ENCODE measurements at regions of chr12 and their contacts with region 1.

Region 1: GRCh38 chr12:56377310-56377988 is 14.8 kb upstream of the APOF start:
- DNase-seq: peak; percentile 54
- H3K4me3 ChIP-seq: peak overlapping the region; percentile 3
- H3K27ac ChIP-seq: peak overlapping the region; percentile 93
- H3K4me1 ChIP-seq: peaks cover 49% of the 10 kb centered on the region
- CTCF ChIP-seq: peak; percentile 58

Region 2: GRCh38 chr12:56315622-56316473 is 61.6 kb before region 1 on chr12 and contains the start of gene CNPY2:
- CTCF ChIA-PET with region 1: no interaction called
- POLR2A ChIA-PET with region 1: interaction called, 3 read pairs
- intact Hi-C with region 1: loop called (anchors 5 kb)
- DNase-seq: peak; percentile 96
- H3K4me3 ChIP-seq: peak within 1 kb of the TSS; percentile 83
- H3K27ac ChIP-seq: peak within 1 kb of the TSS; percentile 60
- H3K4me1 ChIP-seq: peaks cover 14% of the 10 kb centered on the region
- CTCF ChIP-seq: peak; percentile 48; the same call in 1 of the 2 replicates
- total RNA-seq, gene CNPY2: 62.8 and 75.5 TPM in 2 replicates

Region 3: DNA sequence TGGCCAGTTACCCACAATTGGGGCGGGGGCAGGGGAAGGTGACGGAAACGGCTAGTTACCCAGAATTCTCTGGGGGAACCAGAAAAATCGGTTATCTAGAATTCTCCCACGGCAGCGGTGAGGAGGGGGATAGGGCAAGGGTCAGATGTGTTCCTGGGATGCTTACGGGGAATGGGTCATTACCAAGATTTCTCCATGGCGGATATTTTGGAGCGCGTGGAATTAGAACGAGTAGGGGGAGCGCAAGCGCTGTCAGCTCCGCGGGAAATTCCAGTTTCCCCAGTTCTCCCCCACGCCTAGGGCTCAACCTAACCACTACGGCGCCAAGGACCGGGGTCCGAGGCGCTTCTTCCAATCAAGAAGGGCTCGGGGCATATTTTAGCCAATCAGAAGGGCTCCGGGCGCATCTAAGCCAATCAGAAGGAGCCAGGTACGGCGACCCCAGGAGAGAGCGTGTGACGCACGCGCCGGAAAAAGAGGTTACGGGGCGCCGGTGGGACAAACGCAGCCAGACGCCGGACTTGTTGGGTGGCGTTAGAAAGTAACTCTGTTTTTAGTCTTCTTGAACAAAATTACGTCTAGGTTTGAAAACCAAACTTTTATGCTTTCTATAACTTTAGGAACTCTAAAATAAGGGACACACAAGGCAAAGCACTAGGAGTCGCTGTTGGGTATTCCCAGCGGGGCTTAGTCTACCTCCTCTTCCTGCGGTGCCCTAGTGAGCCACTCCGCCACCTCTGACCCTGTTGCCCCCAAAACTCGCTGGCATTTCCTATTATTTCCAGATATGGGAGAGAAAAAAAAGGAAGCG is 43.6 kb before region 1 on chr12 and contains the start of gene PAN2:
- CTCF ChIA-PET with region 1: interaction called, 4 read pairs
- POLR2A ChIA-PET with region 1: interaction called, 11 read pairs
- intact Hi-C with region 1: loop called (anchors 1 kb)
- DNase-seq: peak; percentile 99
- H3K4me3 ChIP-seq: peak within 1 kb of the TSS; percentile 95
- H3K27ac ChIP-seq: peak within 1 kb of the TSS; percentile 94
- H3K4me1 ChIP-seq: peaks cover 56% of the 10 kb centered on the region
- CTCF ChIP-seq: peak; percentile 78
- total RNA-seq, gene PAN2: 69.9 and 106 TPM in 2 replicates

Region 4: GRCh38 chr12:56408799-56409417 is 31.5 kb after region 1 on chr12:
- CTCF ChIA-PET with region 1: no interaction called
- POLR2A ChIA-PET with region 1: no interaction called
- intact Hi-C with region 1: no loop called
- DNase-seq: no peak
- H3K4me3 ChIP-seq: no peak overlapping the region
- H3K27ac ChIP-seq: no peak overlapping the region
- H3K4me1 ChIP-seq: no peaks in the 10 kb centered on the region
- CTCF ChIP-seq: no peak

Region 5: GRCh38 chr12:56461235-56462159 is 84.0 kb after region 1 on chr12:
- CTCF ChIA-PET with region 1: interaction called, 7 read pairs
- POLR2A ChIA-PET with region 1: interaction called, 31 read pairs
- intact Hi-C with region 1: loop called (anchors 2 kb)
- DNase-seq: no peak
- H3K4me3 ChIP-seq: no peak overlapping the region
- H3K27ac ChIP-seq: peak overlapping the region; percentile 96
- H3K4me1 ChIP-seq: peaks cover 49% of the 10 kb centered on the region
- CTCF ChIP-seq: no peak

Region 6: DNA sequence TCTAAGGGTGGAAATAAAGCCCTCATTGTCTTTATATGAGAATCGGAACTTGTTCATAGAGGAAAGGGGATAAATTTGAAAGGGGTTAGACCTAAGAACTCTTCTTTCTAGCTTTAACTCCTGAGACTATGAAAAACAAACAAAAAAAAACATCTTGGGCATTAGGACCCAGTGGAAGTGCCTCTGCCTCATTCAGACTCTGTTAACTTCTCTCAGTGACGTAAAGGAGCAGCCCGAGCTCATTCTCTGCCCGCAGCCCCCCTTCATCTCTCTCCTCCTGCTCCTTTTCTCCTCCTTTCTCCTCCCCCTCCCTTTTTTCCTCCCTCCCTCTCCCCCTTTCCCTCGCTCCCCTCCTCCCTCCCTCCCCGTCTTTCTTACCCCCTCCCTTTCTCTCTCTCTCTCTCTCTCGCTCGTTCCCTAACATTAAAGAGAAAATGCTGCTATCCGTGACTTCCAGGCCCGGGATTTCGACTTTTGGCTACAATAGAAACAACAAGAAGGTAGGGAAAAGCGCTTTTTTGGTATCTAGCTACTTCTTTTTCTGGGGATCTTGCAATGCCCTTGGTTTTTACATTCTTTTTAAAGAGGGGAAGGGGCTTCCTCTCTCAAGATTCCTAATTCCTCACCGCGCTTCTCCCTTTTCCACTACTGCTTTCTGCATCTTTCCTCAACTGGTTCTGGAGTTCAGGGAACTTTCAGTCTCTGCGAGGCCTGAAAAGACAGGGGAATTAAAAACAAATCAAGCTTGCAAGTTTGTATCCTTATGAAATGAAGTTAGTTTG is 144.3 kb after region 1 on chr12 and contains the start of gene RBMS2:
- CTCF ChIA-PET with region 1: no interaction called
- POLR2A ChIA-PET with region 1: no interaction called
- intact Hi-C with region 1: no loop called
- DNase-seq: peak; percentile 34
- H3K4me3 ChIP-seq: peak within 1 kb of the TSS; percentile 44
- H3K27ac ChIP-seq: no peak within 1 kb of the TSS
- H3K4me1 ChIP-seq: no peaks in the 10 kb centered on the region
- CTCF ChIP-seq: no peak
- total RNA-seq, gene RBMS2: 0.32 and 2.2 TPM in 2 replicates

Region 7: GRCh38 chr12:57088459-57089248 is 711.2 kb after region 1 on chr12 and contains the start of gene NAB2:
- CTCF ChIA-PET with region 1: no interaction called
- POLR2A ChIA-PET with region 1: no interaction called
- intact Hi-C with region 1: loop called (anchors 5 kb)
- DNase-seq: peak; percentile 96
- H3K4me3 ChIP-seq: peak within 1 kb of the TSS; percentile 80
- H3K27ac ChIP-seq: peak within 1 kb of the TSS; percentile 88
- H3K4me1 ChIP-seq: peaks cover 42% of the 10 kb centered on the region
- CTCF ChIP-seq: no peak
- total RNA-seq, gene NAB2: 8.5 and 9.6 TPM in 2 replicates